ENCODE measurements at regions of chr12 and their contacts with region 1.

Region 1: GRCh38 chr12:83172866-83173649 is 486.4 kb downstream of the TMTC2 start:
- DNase-seq: peak; percentile 65 to 88 (median 76)
- ATAC-seq: peak; percentile 94
- H3K4me3 ChIP-seq: no peak overlapping the region
- H3K27ac ChIP-seq: peak overlapping the region; percentile 73
- H3K4me1 ChIP-seq: peaks cover 3 to 27% of the 10 kb centered on the region in 2 experiments; a peak in 4 of 5 replicates
- H3K27me3 ChIP-seq: no peaks in the 10 kb centered on the region
- CTCF ChIP-seq: no peak
- EP300 ChIP-seq: peak; percentile 99
- POLR2A ChIP-seq: no peak
- RAD21 ChIP-seq: peak in 1 of 2 experiments; percentile 18; a peak in 1 of 4 replicates

Region 2: GRCh38 chr12:82089369-82090060 is 1083.5 kb before region 1 on chr12:
- CTCF ChIA-PET with region 1: no interaction called
- POLR2A ChIA-PET with region 1: no interaction called
- in situ Hi-C with region 1: no loop called
- intact Hi-C with region 1: no loop called
- DNase-seq: no peak
- ATAC-seq: no peak
- H3K4me3 ChIP-seq: no peak overlapping the region
- H3K27ac ChIP-seq: no peak overlapping the region
- H3K4me1 ChIP-seq: no peaks in the 10 kb centered on the region
- H3K27me3 ChIP-seq: no peaks in the 10 kb centered on the region
- CTCF ChIP-seq: no peak
- EP300 ChIP-seq: no peak
- POLR2A ChIP-seq: no peak
- RAD21 ChIP-seq: no peak

Region 3: DNA sequence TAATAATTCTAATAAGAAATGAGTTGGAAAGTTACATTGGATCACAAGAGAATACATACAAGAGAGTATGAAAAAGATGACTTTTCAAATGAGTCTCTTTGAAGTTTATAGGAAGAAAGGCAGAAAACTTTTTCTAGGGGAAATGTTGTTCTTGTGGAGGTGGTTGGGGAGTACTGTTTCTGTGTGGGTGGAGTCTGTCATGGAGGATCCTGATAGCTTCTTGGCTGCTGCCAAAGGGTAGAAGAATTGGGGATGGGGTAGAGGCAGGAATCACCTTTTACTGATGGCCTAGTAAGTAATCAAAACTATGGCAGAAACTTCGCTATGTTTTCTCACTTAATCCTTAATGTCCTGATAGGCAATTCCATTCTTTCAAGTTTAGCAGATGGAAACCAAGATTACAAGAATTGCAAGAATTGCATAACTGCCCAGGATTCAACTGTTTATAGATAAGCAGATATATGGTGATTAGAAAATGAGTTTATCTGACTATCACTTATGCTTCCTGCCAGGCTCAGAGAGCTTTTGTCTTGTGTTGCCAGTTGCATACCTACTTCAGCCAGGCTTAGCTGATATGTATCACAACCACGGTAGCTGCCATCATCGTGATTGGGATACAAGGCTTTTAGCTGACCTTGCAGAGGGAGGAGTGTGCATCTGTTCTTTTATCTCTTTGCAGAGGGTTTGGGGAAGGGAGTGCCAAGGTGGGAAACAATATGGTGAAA is 22.4 kb before region 1 on chr12:
- CTCF ChIA-PET with region 1: no interaction called
- POLR2A ChIA-PET with region 1: no interaction called
- in situ Hi-C with region 1: no loop called
- intact Hi-C with region 1: loop called (anchors 1 kb)
- DNase-seq: peak; percentile 24 to 52 (median 46)
- ATAC-seq: peak; percentile 88
- H3K4me3 ChIP-seq: no peak overlapping the region
- H3K27ac ChIP-seq: peak overlapping the region; percentile 55; the same call in 1 of the 3 replicates
- H3K4me1 ChIP-seq: peaks cover 0 to 12% of the 10 kb centered on the region in 2 experiments; a peak in 2 of 5 replicates
- H3K27me3 ChIP-seq: no peaks in the 10 kb centered on the region
- CTCF ChIP-seq: no peak
- EP300 ChIP-seq: peak; percentile 38; the same call in 1 of the 2 replicates
- POLR2A ChIP-seq: peak; percentile 80
- RAD21 ChIP-seq: no peak

Region 4: DNA sequence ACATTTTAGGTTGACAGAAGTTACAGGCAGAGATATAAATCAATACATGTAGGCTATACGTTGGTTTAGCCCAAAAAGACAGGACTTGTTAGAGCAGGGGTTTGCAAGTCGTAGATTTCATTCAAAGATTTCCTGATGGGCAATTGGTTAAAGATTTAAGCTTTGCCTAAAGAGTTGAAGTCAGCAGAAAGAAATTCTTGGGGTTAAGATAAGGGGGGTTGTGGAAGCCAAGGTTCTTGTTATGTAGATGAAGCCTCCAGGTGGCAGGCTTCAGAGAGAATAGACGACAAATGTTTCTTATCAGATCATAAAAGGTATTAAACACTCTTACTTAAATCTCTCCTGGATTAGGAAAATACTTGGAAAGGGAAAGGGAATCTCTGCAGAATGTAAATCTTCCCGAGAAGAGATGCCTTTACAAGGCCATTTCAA is 24.4 kb after region 1 on chr12:
- CTCF ChIA-PET with region 1: no interaction called
- POLR2A ChIA-PET with region 1: interaction called, 3 read pairs
- in situ Hi-C with region 1: no loop called
- intact Hi-C with region 1: loop called (anchors 2 kb)
- DNase-seq: peak in 1 of 4 experiments; percentile 11
- ATAC-seq: peak; percentile 37
- H3K4me3 ChIP-seq: no peak overlapping the region
- H3K27ac ChIP-seq: peak overlapping the region; percentile 67; the same call in 2 of the 3 replicates
- H3K4me1 ChIP-seq: no peaks in the 10 kb centered on the region; a peak in 2 of 5 replicates
- H3K27me3 ChIP-seq: no peaks in the 10 kb centered on the region
- CTCF ChIP-seq: no peak; a peak in 1 of 6 replicates
- EP300 ChIP-seq: no peak
- POLR2A ChIP-seq: no peak
- RAD21 ChIP-seq: peak in 1 of 2 experiments; percentile 21; a peak in 1 of 4 replicates